Activated CD4-positive, alpha-beta T cell treated with anti-CD3 and anti-CD28 coated beads, Interleukin-2, amount 10 ng/mL, durations not matched to agents 7 days and 5 days (primary cell): ENCODE measurements at regions of chr1 and their contacts with region 1.

Region 1: GRCh38 chr1:158149577-158150269 is 31.0 kb upstream of the CD1D start:
- DNase-seq: peak; percentile 62
- H3K4me3 Mint-ChIP-seq: peak overlapping the region; percentile 84
- H3K27ac Mint-ChIP-seq: peak overlapping the region; percentile 82
- H3K4me1 Mint-ChIP-seq: peaks cover 16% of the 10 kb centered on the region
- H3K27me3 Mint-ChIP-seq: peaks cover 6% of the 10 kb centered on the region

Region 2: GRCh38 chr1:158013840-158014730 is 135.6 kb before region 1 on chr1:
- CTCF ChIA-PET with region 1: no interaction called
- POLR2A ChIA-PET with region 1: no interaction called
- DNase-seq: no peak
- H3K4me3 Mint-ChIP-seq: no peak overlapping the region
- H3K27ac Mint-ChIP-seq: no peak overlapping the region
- H3K4me1 Mint-ChIP-seq: no peaks in the 10 kb centered on the region
- H3K27me3 Mint-ChIP-seq: peaks cover 4% of the 10 kb centered on the region

Region 3: GRCh38 chr1:158131217-158131616 is 18.5 kb before region 1 on chr1:
- CTCF ChIA-PET with region 1: no interaction called
- POLR2A ChIA-PET with region 1: no interaction called
- DNase-seq: no peak
- H3K4me3 Mint-ChIP-seq: no peak overlapping the region
- H3K27ac Mint-ChIP-seq: no peak overlapping the region
- H3K4me1 Mint-ChIP-seq: peaks cover 6% of the 10 kb centered on the region
- H3K27me3 Mint-ChIP-seq: peaks cover 7% of the 10 kb centered on the region

Region 4: GRCh38 chr1:158177700-158178450 is 28.2 kb after region 1 on chr1:
- CTCF ChIA-PET with region 1: no interaction called
- POLR2A ChIA-PET with region 1: interaction called, 11 read pairs
- DNase-seq: no peak
- H3K4me3 Mint-ChIP-seq: no peak overlapping the region
- H3K27ac Mint-ChIP-seq: no peak overlapping the region
- H3K4me1 Mint-ChIP-seq: peaks cover 23% of the 10 kb centered on the region
- H3K27me3 Mint-ChIP-seq: peaks cover 58% of the 10 kb centered on the region